CD4-positive, alpha-beta memory T cell (primary cell): ENCODE measurements at regions of chr3 and their contacts with region 1.

Region 1: DNA sequence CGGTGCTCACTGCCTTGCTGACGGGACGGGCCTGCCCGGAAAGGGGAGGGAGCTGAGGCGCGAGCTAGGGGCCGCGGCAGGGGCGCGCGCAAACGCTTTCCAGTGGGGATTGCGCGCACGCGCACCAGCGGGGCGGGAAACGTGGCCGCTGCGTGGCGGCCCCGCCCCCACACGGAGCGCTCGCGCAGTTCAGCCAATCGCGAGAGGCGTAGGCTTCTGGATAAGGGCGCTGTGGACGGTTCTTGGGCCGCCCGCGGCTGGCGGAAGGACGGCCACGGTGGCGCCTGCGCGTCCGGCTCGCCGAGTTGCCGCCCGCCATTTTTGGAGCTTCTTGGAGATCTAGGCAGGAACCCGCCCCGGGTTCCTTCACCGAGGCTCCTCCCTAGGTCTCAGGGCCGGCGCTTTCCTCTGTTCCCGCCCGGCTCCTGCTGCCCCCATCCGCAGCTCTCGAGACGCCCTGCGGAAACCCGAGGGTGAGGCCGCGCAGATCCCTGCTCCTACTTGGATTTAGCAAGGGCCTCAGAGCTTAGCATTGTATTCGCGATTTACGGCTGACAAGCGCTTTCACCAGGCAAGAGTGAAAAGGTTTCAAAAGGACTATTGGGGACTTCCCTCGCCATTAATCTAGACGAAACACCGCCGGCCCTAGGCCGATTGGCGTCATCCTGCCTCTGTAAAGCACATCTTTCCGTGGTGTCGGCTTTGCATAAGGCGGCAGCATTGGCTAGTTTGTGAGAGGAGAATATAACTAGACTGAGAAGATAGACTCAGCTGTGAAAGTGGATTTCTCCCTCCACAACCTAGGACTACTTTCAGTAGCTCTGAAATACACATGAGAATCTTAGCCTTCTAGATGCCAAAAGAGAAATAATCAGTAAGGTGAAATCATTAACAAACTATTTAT is 496 bp upstream of the STAG1 start:
- DNase-seq: peak; percentile 97 to 99 (median 99)
- H3K4me3 ChIP-seq: peak overlapping the region; percentile 72 to 94
- H3K4me3 Mint-ChIP-seq: peak overlapping the region; percentile 87 to 97 (median 94)
- H3K27ac ChIP-seq: peak overlapping the region; percentile 80
- H3K27ac Mint-ChIP-seq: peak overlapping the region; percentile 95 to 99 (median 98)
- H3K4me1 ChIP-seq: peaks cover 44% of the 10 kb centered on the region
- H3K4me1 Mint-ChIP-seq: peaks cover 32 to 53% (median 39%) of the 10 kb centered on the region in 4 donors
- H3K27me3 ChIP-seq: no peaks in the 10 kb centered on the region
- H3K27me3 Mint-ChIP-seq: no peaks in the 10 kb centered on the region

Region 2: GRCh38 chr3:135018149-135018923 is 1734.3 kb before region 1 on chr3:
- CTCF ChIA-PET with region 1: no interaction called
- POLR2A ChIA-PET with region 1: no interaction called
- intact Hi-C with region 1: no loop called
- DNase-seq: no peak
- H3K4me3 ChIP-seq: no peak overlapping the region
- H3K4me3 Mint-ChIP-seq: no peak overlapping the region
- H3K27ac ChIP-seq: no peak overlapping the region
- H3K27ac Mint-ChIP-seq: no peak overlapping the region
- H3K4me1 ChIP-seq: no peaks in the 10 kb centered on the region
- H3K4me1 Mint-ChIP-seq: no peaks in the 10 kb centered on the region
- H3K27me3 ChIP-seq: no peaks in the 10 kb centered on the region
- H3K27me3 Mint-ChIP-seq: peaks cover 0 to 2% of the 10 kb centered on the region in 2 donors

Region 3: DNA sequence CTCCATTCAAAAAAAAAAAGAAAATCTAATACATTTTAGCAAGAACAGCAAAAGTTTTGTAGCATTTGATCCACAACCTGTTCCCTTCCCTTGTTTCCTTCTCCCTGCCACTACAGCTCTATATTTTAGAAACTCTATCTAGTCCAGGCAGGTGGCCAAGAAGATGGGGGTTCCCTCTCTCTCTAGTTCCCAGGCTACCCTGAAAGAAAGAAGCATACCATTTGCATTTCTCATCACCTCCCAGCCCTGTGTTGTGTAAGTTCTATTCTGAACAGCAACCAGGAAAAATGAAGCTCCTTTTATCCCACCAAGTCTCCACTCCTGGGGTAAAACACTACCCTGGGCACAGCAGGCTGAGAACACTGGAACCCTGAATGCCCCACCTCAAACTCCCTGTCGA is 402.5 kb before region 1 on chr3:
- CTCF ChIA-PET with region 1: interaction called, 12 read pairs
- POLR2A ChIA-PET with region 1: no interaction called
- intact Hi-C with region 1: no loop called
- DNase-seq: no peak
- H3K4me3 ChIP-seq: no peak overlapping the region
- H3K4me3 Mint-ChIP-seq: no peak overlapping the region
- H3K27ac ChIP-seq: no peak overlapping the region
- H3K27ac Mint-ChIP-seq: peak overlapping the region in 2 of 7 donors; percentile 41 to 52
- H3K4me1 ChIP-seq: peaks cover 5% of the 10 kb centered on the region
- H3K4me1 Mint-ChIP-seq: peaks cover 0 to 9% (median 5%) of the 10 kb centered on the region in 4 donors
- H3K27me3 ChIP-seq: no peaks in the 10 kb centered on the region
- H3K27me3 Mint-ChIP-seq: no peaks in the 10 kb centered on the region

Region 4: GRCh38 chr3:136545664-136546268 is 206.9 kb before region 1 on chr3:
- CTCF ChIA-PET with region 1: interaction called, 19 read pairs
- POLR2A ChIA-PET with region 1: interaction called, 13 read pairs
- intact Hi-C with region 1: loop called (anchors 1 kb)
- DNase-seq: no peak
- H3K4me3 ChIP-seq: no peak overlapping the region
- H3K4me3 Mint-ChIP-seq: no peak overlapping the region
- H3K27ac ChIP-seq: no peak overlapping the region
- H3K27ac Mint-ChIP-seq: peak overlapping the region in 3 of 7 donors; percentile 23 to 49 (median 26)
- H3K4me1 ChIP-seq: peaks cover 8% of the 10 kb centered on the region
- H3K4me1 Mint-ChIP-seq: peaks cover 18 to 35% (median 21%) of the 10 kb centered on the region in 4 donors
- H3K27me3 ChIP-seq: no peaks in the 10 kb centered on the region
- H3K27me3 Mint-ChIP-seq: no peaks in the 10 kb centered on the region

Region 5: GRCh38 chr3:136734382-136735070 is 18.1 kb before region 1 on chr3:
- CTCF ChIA-PET with region 1: interaction called, 20 read pairs
- POLR2A ChIA-PET with region 1: interaction called, 11 read pairs
- intact Hi-C with region 1: loop called (anchors 2 kb)
- DNase-seq: no peak
- H3K4me3 ChIP-seq: no peak overlapping the region
- H3K4me3 Mint-ChIP-seq: peak overlapping the region in 4 of 8 donors; percentile 13 to 53 (median 18)
- H3K27ac ChIP-seq: no peak overlapping the region
- H3K27ac Mint-ChIP-seq: peak overlapping the region in 6 of 7 donors; percentile 8 to 79 (median 26)
- H3K4me1 ChIP-seq: peaks cover 60% of the 10 kb centered on the region
- H3K4me1 Mint-ChIP-seq: peaks cover 40 to 64% (median 54%) of the 10 kb centered on the region in 4 donors
- H3K27me3 ChIP-seq: no peaks in the 10 kb centered on the region
- H3K27me3 Mint-ChIP-seq: no peaks in the 10 kb centered on the region

Region 6: GRCh38 chr3:136861890-136862616 is 109.4 kb after region 1 on chr3 and contains the start of gene NCK1:
- CTCF ChIA-PET with region 1: interaction called, 80 read pairs
- POLR2A ChIA-PET with region 1: interaction called, 143 read pairs
- intact Hi-C with region 1: loop called (anchors 1 kb)
- DNase-seq: peak; percentile 97 to 100 (median 98)
- H3K4me3 ChIP-seq: peak within 1 kb of the TSS; percentile 74 to 89
- H3K4me3 Mint-ChIP-seq: peak within 1 kb of the TSS; percentile 80 to 99 (median 96)
- H3K27ac ChIP-seq: peak within 1 kb of the TSS; percentile 91
- H3K27ac Mint-ChIP-seq: peak within 1 kb of the TSS; percentile 98 to 99 (median 98)
- H3K4me1 ChIP-seq: peaks cover 47% of the 10 kb centered on the region
- H3K4me1 Mint-ChIP-seq: peaks cover 38 to 74% (median 54%) of the 10 kb centered on the region in 4 donors
- H3K27me3 ChIP-seq: no peaks in the 10 kb centered on the region
- H3K27me3 Mint-ChIP-seq: no peaks in the 10 kb centered on the region
- total RNA-seq, gene NCK1: 61.2 to 68.4 TPM

Region 7: GRCh38 chr3:136929984-136930670 is 177.5 kb after region 1 on chr3:
- CTCF ChIA-PET with region 1: interaction called, 19 read pairs
- POLR2A ChIA-PET with region 1: interaction called, 6 read pairs
- intact Hi-C with region 1: no loop called
- DNase-seq: no peak
- H3K4me3 ChIP-seq: no peak overlapping the region
- H3K4me3 Mint-ChIP-seq: peak overlapping the region in 1 of 8 donors; percentile 9
- H3K27ac ChIP-seq: no peak overlapping the region
- H3K27ac Mint-ChIP-seq: peak overlapping the region in 1 of 7 donors; percentile 48
- H3K4me1 ChIP-seq: peaks cover 52% of the 10 kb centered on the region
- H3K4me1 Mint-ChIP-seq: peaks cover 35 to 76% (median 61%) of the 10 kb centered on the region in 4 donors
- H3K27me3 ChIP-seq: no peaks in the 10 kb centered on the region
- H3K27me3 Mint-ChIP-seq: no peaks in the 10 kb centered on the region

Region 8: GRCh38 chr3:137264071-137264820 is 511.6 kb after region 1 on chr3:
- CTCF ChIA-PET with region 1: no interaction called
- POLR2A ChIA-PET with region 1: no interaction called
- intact Hi-C with region 1: no loop called
- DNase-seq: no peak
- H3K4me3 ChIP-seq: no peak overlapping the region
- H3K4me3 Mint-ChIP-seq: no peak overlapping the region
- H3K27ac ChIP-seq: no peak overlapping the region
- H3K27ac Mint-ChIP-seq: no peak overlapping the region
- H3K4me1 ChIP-seq: no peaks in the 10 kb centered on the region
- H3K4me1 Mint-ChIP-seq: no peaks in the 10 kb centered on the region
- H3K27me3 ChIP-seq: no peaks in the 10 kb centered on the region
- H3K27me3 Mint-ChIP-seq: peaks cover 0 to 3% of the 10 kb centered on the region in 2 donors